ENCODE measurements at regions of chr5 and their contacts with region 1.

Region 1: DNA sequence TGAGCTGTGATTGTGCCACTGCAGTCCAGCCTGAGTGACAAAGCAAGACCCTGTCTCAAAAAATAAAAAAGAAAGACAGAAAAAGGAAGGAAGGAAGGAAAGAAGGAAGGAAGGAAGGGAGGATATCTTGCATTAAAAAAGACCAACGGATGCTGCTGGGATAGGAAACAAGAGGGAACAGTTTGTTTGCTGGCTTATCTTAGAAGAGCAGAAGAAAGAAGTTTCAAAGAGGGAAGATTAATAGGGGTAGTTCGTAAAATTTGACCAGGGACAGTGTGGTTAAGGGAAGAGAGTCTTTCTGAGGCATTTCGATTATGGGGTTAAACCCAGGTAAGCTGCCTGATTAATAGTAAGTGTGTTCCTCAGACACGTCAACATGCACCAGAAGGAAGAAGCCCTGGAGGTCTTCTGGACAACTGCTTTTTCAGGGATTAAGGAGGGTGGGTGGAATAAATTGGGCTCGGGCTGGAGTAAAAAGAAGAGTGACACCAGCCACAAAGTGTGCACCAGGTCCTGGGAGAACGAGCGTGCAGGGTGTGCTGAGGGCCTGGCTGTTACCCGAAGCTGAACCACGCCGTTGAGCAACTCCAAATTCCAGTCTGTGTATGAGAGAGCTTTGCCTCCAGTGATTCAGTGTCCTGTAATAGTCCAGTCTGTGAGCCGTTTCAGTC is 24.8 kb downstream of the FYB1 start:
- DNase-seq: no peak
- H3K4me3 ChIP-seq: no peak overlapping the region
- H3K27ac ChIP-seq: no peak overlapping the region
- H3K27me3 ChIP-seq: peaks cover 0 to 4% (median 0%) of the 10 kb centered on the region in 45 donors
- CTCF ChIP-seq: no peak

Region 2: GRCh38 chr5:39148983-39149534 is 45.5 kb before region 1 on chr5:
- intact Hi-C with region 1: loop called in 1 of 2 experiments (anchors 5 kb)
- DNase-seq: no peak
- H3K4me3 ChIP-seq: no peak overlapping the region
- H3K27ac ChIP-seq: peak overlapping the region in 33 of 59 donors; percentile 1 to 78 (median 39)
- H3K27me3 ChIP-seq: peaks cover 0 to 5% (median 0%) of the 10 kb centered on the region in 45 donors
- CTCF ChIP-seq: peak in 55 of 56 donors; percentile 39 to 79 (median 59)

Region 3: DNA sequence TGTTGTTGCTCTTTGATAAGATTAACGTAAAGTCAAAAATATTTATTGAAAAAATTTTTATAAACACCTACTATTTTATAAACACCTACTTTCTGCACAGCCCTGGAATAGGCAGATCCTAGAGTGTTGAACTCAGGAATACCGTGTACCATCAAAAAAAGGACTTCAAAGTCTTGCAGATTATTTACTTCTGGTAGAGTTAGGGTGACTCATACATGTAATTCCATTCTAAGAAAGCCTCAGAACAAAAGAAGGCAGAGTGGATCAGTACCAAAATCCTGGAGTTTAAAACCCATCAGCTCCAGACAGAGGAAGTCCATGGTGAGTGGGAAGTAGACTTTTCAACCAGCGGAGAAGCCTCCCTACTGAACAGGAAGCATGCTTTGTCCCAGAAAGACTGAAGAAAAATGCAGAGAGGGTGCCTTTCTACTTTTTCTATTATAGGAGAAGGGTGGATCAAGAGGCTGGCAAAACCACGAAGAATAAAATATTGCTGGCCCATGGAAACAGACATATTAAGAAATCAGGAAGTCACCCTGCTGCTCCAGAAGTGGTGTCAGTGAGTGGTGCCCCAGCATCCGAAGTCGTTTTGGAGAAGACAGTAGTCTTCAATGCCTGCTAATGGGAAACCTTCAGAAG is 275.3 kb after region 1 on chr5:
- intact Hi-C with region 1: no loop called
- DNase-seq: no peak
- H3K4me3 ChIP-seq: no peak overlapping the region
- H3K27ac ChIP-seq: no peak overlapping the region
- H3K27me3 ChIP-seq: peaks cover 0 to 10% (median 0%) of the 10 kb centered on the region in 45 donors
- CTCF ChIP-seq: no peak